SK-N-SH (cell line): ENCODE measurements at regions of chr6 and their contacts with region 1.

Region 1: GRCh38 chr6:20126789-20127653 is 85.2 kb downstream of the MBOAT1 start:
- DNase-seq: peak; percentile 70
- H3K4me3 ChIP-seq: no peak overlapping the region; a peak in 1 of 4 replicates
- H3K27ac ChIP-seq: no peak overlapping the region
- H3K4me1 ChIP-seq: peaks cover 0 to 6% of the 10 kb centered on the region in 2 experiments; a peak in 2 of 4 replicates
- H3K27me3 ChIP-seq: no peaks in the 10 kb centered on the region
- CTCF ChIP-seq: peak; percentile 95
- EP300 ChIP-seq: no peak
- RAD21 ChIP-seq: peak; percentile 64

Region 2: GRCh38 chr6:20092071-20092566 is 34.9 kb before region 1 on chr6:
- CTCF ChIA-PET with region 1: interaction called, 123 read pairs
- POLR2A ChIA-PET with region 1: no interaction called
- DNase-seq: peak; percentile 36
- H3K4me3 ChIP-seq: no peak overlapping the region; a peak in 1 of 4 replicates
- H3K27ac ChIP-seq: no peak overlapping the region
- H3K4me1 ChIP-seq: no peaks in the 10 kb centered on the region
- H3K27me3 ChIP-seq: no peaks in the 10 kb centered on the region
- CTCF ChIP-seq: peak; percentile 77
- EP300 ChIP-seq: no peak
- RAD21 ChIP-seq: peak; percentile 81

Region 3: DNA sequence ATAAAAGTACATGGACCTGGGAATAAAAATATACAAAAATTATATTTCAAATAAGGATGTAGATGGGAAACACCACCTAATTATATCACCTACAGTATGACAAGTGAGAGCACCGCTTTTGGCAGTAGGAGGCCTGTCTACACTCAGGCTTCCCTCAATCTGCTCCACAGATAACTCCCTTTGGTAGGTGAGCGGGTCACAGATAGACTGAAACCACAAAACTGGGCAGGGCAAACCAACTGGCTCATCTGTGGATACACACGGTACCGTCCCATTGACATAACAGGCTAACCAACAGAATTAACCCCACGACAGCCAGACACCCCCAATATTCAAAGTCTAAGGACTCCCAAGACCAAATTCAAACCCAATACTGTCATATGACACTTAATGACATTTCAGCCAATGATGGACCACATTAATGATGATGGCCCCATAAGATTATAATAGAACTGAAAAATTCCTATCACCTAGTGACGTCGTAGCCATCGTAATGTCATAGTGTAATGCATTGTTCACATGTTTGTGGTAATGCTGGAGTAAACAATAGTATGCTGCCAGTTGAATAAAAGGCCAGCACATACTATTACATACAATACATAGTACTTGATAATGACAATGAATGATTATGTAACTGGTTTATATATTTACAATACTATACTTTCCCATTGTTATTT is 24.5 kb before region 1 on chr6:
- CTCF ChIA-PET with region 1: interaction called, 39 read pairs
- POLR2A ChIA-PET with region 1: no interaction called
- DNase-seq: no peak
- H3K4me3 ChIP-seq: no peak overlapping the region
- H3K27ac ChIP-seq: no peak overlapping the region
- H3K4me1 ChIP-seq: no peaks in the 10 kb centered on the region
- H3K27me3 ChIP-seq: no peaks in the 10 kb centered on the region
- CTCF ChIP-seq: no peak
- EP300 ChIP-seq: no peak
- RAD21 ChIP-seq: no peak

Region 4: GRCh38 chr6:20109526-20109925 is 17.5 kb before region 1 on chr6:
- CTCF ChIA-PET with region 1: interaction called, 28 read pairs
- POLR2A ChIA-PET with region 1: no interaction called
- DNase-seq: no peak
- H3K4me3 ChIP-seq: no peak overlapping the region
- H3K27ac ChIP-seq: no peak overlapping the region
- H3K4me1 ChIP-seq: no peaks in the 10 kb centered on the region
- H3K27me3 ChIP-seq: no peaks in the 10 kb centered on the region
- CTCF ChIP-seq: no peak
- EP300 ChIP-seq: no peak
- RAD21 ChIP-seq: no peak

Region 5: DNA sequence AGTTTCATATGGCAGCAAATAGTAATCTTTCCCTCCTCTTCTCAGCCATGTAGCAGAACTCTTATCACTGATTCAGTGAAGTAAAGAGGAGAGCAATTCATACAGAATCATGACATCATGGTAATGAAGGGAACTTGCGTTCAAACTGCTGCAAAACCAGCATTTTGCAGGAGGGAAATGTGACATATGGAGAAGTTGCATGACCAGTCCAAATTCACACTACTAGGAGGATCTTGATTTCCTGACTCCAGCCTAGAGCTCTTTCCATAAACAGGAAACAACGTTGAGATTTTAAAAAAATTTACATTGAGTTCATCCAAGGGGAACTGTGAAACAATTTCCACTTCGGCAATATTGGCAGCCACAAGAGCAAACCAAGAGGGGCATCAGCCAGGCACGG is 21.4 kb after region 1 on chr6:
- CTCF ChIA-PET with region 1: interaction called, 13 read pairs
- POLR2A ChIA-PET with region 1: no interaction called
- DNase-seq: no peak
- H3K4me3 ChIP-seq: no peak overlapping the region
- H3K27ac ChIP-seq: no peak overlapping the region
- H3K4me1 ChIP-seq: no peaks in the 10 kb centered on the region
- H3K27me3 ChIP-seq: no peaks in the 10 kb centered on the region
- CTCF ChIP-seq: no peak
- EP300 ChIP-seq: no peak
- RAD21 ChIP-seq: no peak

Region 6: DNA sequence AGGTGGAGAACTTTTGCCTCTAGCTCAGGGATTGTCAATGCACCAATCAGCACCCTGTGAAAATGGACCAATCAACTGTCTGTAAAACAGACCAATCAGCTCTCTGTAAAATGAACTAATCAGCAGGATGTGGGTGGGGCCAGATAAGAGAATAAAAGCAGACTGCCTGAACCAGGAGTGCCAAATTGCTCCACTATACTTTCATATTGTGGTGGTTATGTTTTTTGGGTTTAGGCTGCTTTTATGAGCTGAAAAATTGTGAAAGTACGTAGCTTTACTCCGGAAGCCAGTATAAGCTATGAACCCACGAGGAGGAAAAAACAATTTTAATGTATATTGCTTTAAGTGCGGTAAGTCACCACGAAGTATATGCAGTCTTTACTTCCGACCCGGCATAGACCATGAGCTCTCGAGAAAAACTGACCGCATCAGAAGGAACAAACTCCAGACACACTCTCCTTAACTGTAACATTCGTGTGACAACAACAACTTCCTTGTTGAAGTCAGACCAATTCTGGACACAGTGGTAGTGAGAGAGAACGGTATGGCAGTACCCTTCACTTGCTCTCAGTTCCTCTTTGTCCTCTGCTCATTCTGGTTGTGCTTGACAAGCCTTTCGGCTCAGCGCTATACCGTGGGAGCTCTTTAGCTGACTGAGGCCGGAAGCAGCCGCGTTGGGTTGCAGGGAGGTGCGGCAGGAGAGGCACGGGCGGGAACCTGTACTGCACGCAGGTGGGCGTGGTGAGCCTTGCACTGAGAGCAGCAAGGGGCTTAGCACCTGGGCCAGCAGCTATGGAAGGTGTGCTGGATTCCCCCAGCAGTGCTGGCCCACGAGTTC is 192.7 kb after region 1 on chr6:
- CTCF ChIA-PET with region 1: no interaction called
- POLR2A ChIA-PET with region 1: no interaction called
- DNase-seq: no peak
- H3K4me3 ChIP-seq: no peak overlapping the region
- H3K27ac ChIP-seq: no peak overlapping the region
- H3K4me1 ChIP-seq: no peaks in the 10 kb centered on the region
- H3K27me3 ChIP-seq: no peaks in the 10 kb centered on the region
- CTCF ChIP-seq: no peak
- EP300 ChIP-seq: no peak
- RAD21 ChIP-seq: no peak